ENCODE measurements at regions of chr1 and their contacts with region 1.

Region 1: DNA sequence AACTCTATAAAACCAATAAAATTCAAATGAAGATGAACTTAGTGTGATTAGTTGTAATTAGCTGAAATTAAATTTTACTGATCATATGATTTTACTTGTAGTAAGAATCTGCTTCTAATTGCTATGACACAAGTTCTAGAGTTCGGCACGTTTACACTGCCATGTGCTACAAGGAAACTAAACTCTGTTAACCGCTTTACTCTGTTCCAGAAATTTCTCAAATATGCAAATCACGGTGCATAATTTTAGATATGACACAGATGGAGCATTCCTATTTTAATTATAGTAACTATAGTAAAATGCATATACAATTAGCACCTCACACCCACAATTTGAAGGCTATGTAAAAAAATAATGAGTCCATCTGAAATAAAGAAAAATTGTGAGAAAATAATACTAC is 14.8 kb downstream of the HEATR1 start:
- DNase-seq: no peak
- ATAC-seq: no peak
- H3K4me3 ChIP-seq: no peak overlapping the region
- H3K4me3 Mint-ChIP-seq: no peak overlapping the region
- H3K27ac ChIP-seq: no peak overlapping the region
- H3K27ac Mint-ChIP-seq: no peak overlapping the region
- H3K4me1 ChIP-seq: no peaks in the 10 kb centered on the region
- H3K4me1 Mint-ChIP-seq: peaks cover 0 to 12% (median 0%) of the 10 kb centered on the region in 7 donors
- H3K27me3 ChIP-seq: no peaks in the 10 kb centered on the region
- H3K27me3 Mint-ChIP-seq: no peaks in the 10 kb centered on the region

Region 2: DNA sequence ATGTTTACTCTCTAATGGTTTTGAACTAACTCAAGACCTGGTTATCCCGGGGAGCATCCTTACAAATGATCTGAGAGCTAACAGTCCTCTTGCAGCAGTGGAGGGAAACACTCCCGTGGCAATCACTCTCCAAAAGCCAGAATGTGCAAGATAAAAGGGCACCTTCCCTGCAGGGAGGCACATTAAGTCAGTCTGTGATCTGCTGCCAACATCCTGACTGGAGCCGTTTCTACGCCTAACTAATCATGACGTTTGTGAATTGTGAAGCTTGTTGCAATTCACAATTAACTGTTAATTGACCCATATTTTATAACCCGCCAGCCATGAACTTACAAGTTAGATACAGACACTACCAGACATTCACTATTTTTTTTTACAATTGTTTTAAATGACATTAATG is 117.9 kb before region 1 on chr1:
- CTCF ChIA-PET with region 1: no interaction called
- POLR2A ChIA-PET with region 1: no interaction called
- intact Hi-C with region 1: no loop called
- DNase-seq: no peak
- ATAC-seq: no peak
- H3K4me3 ChIP-seq: no peak overlapping the region
- H3K4me3 Mint-ChIP-seq: no peak overlapping the region
- H3K27ac ChIP-seq: no peak overlapping the region
- H3K27ac Mint-ChIP-seq: no peak overlapping the region
- H3K4me1 ChIP-seq: no peaks in the 10 kb centered on the region
- H3K4me1 Mint-ChIP-seq: peaks cover 0 to 6% (median under 1%) of the 10 kb centered on the region in 7 donors
- H3K27me3 ChIP-seq: no peaks in the 10 kb centered on the region
- H3K27me3 Mint-ChIP-seq: peaks cover 0 to 14% (median 8%) of the 10 kb centered on the region in 5 donors

Region 3: GRCh38 chr1:236575523-236575922 is 14.0 kb before region 1 on chr1:
- CTCF ChIA-PET with region 1: no interaction called
- POLR2A ChIA-PET with region 1: no interaction called
- intact Hi-C with region 1: loop called in 1 of 2 experiments (anchors 2 kb)
- DNase-seq: no peak
- ATAC-seq: no peak
- H3K4me3 ChIP-seq: no peak overlapping the region
- H3K4me3 Mint-ChIP-seq: no peak overlapping the region
- H3K27ac ChIP-seq: no peak overlapping the region
- H3K27ac Mint-ChIP-seq: no peak overlapping the region
- H3K4me1 ChIP-seq: no peaks in the 10 kb centered on the region
- H3K4me1 Mint-ChIP-seq: peaks cover 0 to 4% (median 0%) of the 10 kb centered on the region in 7 donors
- H3K27me3 ChIP-seq: no peaks in the 10 kb centered on the region
- H3K27me3 Mint-ChIP-seq: no peaks in the 10 kb centered on the region